Activated naive CD8-positive, alpha-beta T cell treated with anti-CD3 and anti-CD28 coated beads, Interleukin-2, amount 10 ng/mL, durations not matched to agents 7 days and 5 days (primary cell): ENCODE measurements at regions of chr18 and their contacts with region 1.

Region 1: GRCh38 chr18:35240664-35241447 is at the start of gene ZNF397:
- DNase-seq: peak; percentile 94
- ATAC-seq: peak; percentile 99
- H3K4me3 Mint-ChIP-seq: peak within 1 kb of the TSS; percentile 96
- H3K27ac Mint-ChIP-seq: peak within 1 kb of the TSS; percentile 89
- H3K4me1 Mint-ChIP-seq: peaks cover 5% of the 10 kb centered on the region
- H3K27me3 Mint-ChIP-seq: no peaks in the 10 kb centered on the region
- total RNA-seq, gene ZNF397: 20.9 to 26.1 TPM

Region 2: DNA sequence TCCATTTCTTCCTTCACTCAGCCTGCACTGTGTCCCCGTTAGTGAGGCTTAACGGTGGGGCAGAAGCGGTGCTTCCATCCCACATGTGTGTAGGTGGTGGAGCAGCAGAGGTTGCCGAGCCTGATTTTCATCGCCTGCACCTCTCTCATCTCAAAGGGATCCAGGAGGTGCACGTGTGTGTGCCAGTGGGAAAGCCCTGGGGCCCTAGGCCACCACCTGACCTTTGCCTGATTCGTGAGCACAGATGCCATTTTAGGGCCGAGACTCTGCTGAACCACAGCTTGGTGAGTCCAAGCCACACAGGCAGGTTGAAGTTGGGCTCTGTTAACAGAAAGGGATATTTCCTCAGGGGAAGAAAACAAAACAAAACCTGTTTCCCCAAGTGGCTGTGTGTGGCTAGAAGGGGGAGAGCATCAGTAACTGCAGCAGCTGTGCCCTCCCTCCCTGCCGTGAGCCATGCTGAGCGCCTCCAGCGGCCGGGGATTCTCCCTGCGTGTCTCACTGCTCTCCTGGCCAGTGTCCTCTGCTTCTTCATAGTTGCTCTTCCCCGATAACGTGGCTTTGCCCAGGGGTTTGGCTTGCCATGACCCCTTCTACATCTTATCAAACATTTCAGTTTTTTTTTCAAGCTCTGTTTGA is 118.2 kb before region 1 on chr18:
- POLR2A ChIA-PET with region 1: no interaction called
- DNase-seq: no peak
- ATAC-seq: peak; percentile 80
- H3K4me3 Mint-ChIP-seq: peak overlapping the region; percentile 11
- H3K27ac Mint-ChIP-seq: peak overlapping the region; percentile 31
- H3K4me1 Mint-ChIP-seq: peaks cover 11% of the 10 kb centered on the region
- H3K27me3 Mint-ChIP-seq: no peaks in the 10 kb centered on the region

Region 3: DNA sequence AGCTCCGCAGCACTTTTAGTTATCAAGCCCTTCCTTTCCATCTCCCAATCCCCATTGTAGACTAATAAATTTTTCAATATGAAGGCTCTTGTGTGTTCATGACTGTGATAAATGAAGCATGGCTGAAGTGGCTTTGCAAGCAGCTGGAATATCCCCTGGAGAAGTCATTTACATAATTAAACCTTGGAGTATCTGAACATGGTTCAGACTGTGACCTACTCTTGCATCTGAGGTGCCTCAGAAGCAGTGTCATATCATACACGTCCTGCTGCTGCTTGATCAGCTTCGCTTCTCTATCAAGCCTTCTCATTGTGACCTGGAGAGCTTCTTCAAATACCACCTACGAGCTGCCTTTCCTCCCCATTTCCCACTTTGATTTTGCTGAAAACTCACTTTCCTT is 48.4 kb before region 1 on chr18:
- POLR2A ChIA-PET with region 1: no interaction called
- DNase-seq: no peak
- ATAC-seq: no peak
- H3K4me3 Mint-ChIP-seq: no peak overlapping the region
- H3K27ac Mint-ChIP-seq: no peak overlapping the region
- H3K4me1 Mint-ChIP-seq: peaks cover 4% of the 10 kb centered on the region
- H3K27me3 Mint-ChIP-seq: peaks cover 2% of the 10 kb centered on the region

Region 4: DNA sequence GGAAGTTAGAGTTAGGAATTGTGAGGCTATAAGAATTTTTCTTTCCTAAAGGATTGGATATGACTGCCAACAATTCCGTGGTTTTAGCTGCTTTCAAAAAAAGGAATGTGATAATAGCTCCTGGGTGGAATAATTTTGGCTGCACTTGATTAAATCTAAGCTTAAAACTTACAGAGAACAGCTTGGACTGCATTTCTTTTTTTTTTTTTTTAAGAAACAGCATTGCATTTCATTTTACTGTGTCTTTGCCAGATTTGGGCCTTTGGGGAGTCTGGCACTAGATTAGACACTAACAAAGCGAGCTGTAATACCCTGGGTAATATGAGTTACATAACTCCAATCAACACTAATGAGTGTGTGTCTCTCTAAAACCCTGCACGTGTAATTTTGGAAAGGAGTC is 37.8 kb before region 1 on chr18:
- POLR2A ChIA-PET with region 1: no interaction called
- DNase-seq: no peak
- ATAC-seq: no peak
- H3K4me3 Mint-ChIP-seq: no peak overlapping the region
- H3K27ac Mint-ChIP-seq: no peak overlapping the region
- H3K4me1 Mint-ChIP-seq: no peaks in the 10 kb centered on the region
- H3K27me3 Mint-ChIP-seq: peaks cover 5% of the 10 kb centered on the region

Region 5: DNA sequence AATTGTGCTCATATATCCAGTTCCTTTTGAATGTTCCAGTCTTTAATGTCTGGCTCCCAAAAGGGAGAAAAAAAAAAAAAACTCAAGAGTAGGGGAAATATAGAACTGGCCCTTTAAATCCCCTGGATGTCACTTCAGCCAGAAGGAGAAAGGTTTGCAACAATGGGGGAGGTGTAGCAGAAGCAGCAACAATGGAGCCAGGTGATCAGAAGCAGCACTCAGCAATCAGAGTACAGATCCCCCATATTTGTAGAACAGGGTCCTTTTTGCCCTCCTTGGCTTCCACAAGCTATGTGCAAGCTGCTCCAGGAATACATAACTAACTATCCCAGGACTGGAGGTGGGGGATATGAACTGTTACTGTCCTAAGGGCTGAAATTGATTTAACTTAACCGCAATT is 25.8 kb before region 1 on chr18:
- POLR2A ChIA-PET with region 1: no interaction called
- DNase-seq: no peak
- ATAC-seq: no peak
- H3K4me3 Mint-ChIP-seq: no peak overlapping the region
- H3K27ac Mint-ChIP-seq: no peak overlapping the region
- H3K4me1 Mint-ChIP-seq: no peaks in the 10 kb centered on the region
- H3K27me3 Mint-ChIP-seq: peaks cover 8% of the 10 kb centered on the region

Region 6: DNA sequence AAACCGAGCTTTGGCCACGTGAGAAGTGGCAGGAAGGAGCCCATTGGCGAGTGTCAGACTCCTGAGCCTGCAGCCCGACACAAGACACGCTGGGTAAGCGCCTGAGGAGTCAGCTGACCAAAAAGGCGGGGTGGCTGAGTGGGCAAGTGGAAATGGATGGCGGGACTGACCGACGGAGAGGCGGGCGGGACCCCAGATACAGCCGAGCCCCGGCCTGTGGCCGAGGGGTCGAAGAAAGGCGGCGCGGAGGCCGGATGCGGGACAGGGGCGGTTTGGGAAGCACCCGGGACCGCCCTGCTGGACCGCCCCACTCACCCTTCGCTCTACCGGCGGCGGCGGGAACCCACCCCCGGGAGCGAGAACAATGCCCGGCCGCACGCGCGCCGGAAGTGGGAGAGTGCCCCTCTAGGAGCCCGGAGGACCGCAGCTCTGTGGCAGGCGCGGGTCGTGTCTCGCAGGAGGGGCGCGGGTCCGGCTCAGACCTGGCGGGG is 26.4 kb after region 1 on chr18:
- POLR2A ChIA-PET with region 1: interaction called, 16 read pairs
- DNase-seq: peak; percentile 68
- ATAC-seq: peak; percentile 66
- H3K4me3 Mint-ChIP-seq: peak overlapping the region; percentile 87
- H3K27ac Mint-ChIP-seq: peak overlapping the region; percentile 96
- H3K4me1 Mint-ChIP-seq: peaks cover 19% of the 10 kb centered on the region
- H3K27me3 Mint-ChIP-seq: no peaks in the 10 kb centered on the region

Region 7: DNA sequence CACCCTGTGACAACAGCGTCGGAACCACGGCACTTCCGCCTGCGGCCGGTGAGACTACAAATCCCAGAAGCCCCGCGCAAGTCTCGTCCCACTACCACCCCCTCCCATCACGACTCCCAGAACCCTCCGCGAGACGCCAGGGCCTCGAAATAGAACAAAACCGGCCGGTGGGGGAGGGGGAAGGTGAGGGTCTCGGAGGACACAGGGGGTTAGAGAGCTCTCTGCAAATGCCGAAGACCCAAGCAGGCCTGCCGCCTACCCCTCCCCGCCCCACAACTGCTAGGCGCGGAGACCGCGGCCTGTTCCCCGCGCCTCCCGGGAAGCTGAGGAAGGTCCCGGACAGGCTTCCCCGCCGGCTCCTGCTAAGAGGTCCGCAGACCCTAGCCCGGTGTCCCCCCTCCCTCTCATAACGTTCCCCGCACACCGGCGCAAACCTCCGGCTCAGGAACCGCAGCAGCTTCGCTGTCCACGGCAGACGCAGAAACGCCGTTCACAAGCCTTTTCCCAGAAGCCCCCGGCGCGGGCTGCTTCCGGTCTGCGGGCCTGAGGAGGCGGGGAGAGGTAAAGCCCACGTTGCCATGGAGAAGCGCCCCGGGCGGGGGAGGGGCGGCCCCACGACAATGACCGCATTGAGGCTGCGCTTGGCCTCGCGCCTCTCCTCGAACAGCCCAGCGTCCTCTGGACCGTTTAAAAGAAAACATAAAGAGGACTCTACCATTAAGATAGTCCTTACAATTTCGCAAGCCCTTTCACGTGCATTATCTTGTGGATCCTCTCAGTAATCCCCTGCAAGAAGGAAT is 103.3 kb after region 1 on chr18 and contains the start of gene ZNF24:
- POLR2A ChIA-PET with region 1: interaction called, 19 read pairs
- DNase-seq: peak; percentile 93
- ATAC-seq: peak; percentile 87
- H3K4me3 Mint-ChIP-seq: peak within 1 kb of the TSS; percentile 97
- H3K27ac Mint-ChIP-seq: peak within 1 kb of the TSS; percentile 95
- H3K4me1 Mint-ChIP-seq: peaks cover 21% of the 10 kb centered on the region
- H3K27me3 Mint-ChIP-seq: no peaks in the 10 kb centered on the region
- total RNA-seq, gene ZNF24: 63.2 to 66.4 TPM